CD8-positive, alpha-beta memory T cell (primary cell): ENCODE measurements at regions of chr11 and their contacts with region 1.

Region 1: DNA sequence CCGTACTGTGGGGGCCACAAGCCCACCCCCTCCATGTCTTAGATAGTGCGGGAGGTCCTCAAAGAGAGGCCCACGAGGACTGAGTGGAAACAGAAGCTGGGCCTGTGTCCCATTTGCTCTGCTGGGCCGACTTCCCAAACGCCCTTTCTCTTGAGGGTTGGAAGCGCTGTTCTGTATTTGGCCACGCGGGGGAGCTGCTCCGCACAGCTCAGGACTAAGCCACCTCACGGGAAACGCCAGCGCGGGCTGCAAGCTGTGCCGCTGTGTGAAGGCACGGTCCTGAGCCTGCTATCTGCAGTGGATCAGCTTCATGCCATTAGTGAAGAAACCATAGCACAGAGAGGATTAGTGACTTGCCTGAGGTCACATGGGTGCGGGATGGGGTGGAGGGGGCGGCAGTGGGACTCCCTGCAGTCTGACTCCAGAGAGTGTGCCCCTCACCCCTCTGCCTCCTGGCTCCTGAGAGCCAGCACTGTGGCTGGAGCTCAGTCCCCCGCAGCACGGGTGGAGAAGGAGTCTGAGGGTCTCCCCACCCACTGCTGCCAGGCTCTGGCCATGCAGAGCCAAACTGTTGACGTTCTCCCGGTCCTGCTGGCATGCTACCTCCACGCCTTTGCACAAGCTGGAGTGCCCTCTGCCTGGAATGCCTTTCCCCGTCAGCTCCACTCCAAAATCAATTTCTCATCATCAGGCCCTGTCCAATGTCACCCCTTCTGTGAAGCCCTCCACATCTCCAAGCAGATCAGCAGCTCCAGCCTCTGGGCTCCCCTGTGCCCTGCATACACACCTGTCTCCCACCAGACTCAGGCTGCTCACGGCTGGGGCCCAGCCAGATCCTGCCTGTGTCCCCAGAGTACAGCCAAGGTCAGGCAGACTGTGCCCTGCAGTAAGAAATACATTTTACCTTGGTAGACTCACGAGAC is 51.5 kb upstream of the LRRC32 start:
- DNase-seq: peak; percentile 41 to 77 (median 57)
- H3K4me3 ChIP-seq: no peak overlapping the region
- H3K4me3 Mint-ChIP-seq: peak overlapping the region in 2 of 7 donors; percentile 2 to 64
- H3K27ac ChIP-seq: no peak overlapping the region
- H3K27ac Mint-ChIP-seq: no peak overlapping the region
- H3K4me1 ChIP-seq: peaks cover 7% of the 10 kb centered on the region
- H3K4me1 Mint-ChIP-seq: peaks cover 6 to 8% (median 6%) of the 10 kb centered on the region in 3 donors
- H3K27me3 ChIP-seq: no peaks in the 10 kb centered on the region
- H3K27me3 Mint-ChIP-seq: peaks cover 14 to 36% of the 10 kb centered on the region in 2 donors

Region 2: DNA sequence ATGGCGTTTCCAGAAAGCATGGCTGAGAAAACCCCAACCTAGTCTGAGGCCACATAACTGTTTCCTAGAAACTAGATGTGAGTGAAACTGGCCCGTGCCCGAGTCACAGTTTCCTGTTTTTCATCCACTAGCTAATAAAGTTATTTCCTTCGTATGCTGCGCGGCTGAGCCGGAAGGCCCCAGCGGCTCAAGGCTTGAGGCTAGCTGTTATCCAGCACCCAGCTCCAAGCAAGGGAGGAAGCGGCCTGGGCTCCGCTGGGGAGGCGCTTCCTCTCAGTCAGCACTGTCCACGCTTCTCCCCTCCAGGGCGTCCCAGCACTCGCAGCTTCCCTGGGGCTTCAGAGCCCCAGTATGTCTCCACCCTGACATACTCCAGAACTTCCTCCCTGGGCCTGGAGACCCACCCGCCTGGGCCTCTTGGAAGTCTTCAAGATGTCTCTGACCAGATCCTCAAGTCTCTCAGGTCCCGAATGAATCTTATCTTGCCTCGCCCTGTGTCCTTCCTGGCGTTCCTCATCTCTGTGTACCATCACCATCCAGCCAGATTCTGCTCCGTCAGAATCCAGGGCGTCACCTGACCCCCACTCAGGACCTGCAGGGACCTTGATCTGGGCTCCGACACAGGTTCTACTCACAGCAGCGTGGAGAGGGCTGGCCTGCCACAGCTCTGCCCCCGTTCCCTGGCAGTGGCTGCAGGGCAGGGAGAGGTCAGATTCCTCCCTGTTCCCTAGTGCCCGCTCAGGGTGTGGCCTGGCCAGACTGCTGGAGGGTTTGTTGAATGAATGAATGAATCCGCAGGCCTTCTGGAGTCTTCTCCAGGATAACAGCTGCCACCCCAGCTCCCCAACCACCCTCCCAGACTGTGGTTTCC is 133.3 kb before region 1 on chr11:
- CTCF ChIA-PET with region 1: no interaction called
- POLR2A ChIA-PET with region 1: no interaction called
- DNase-seq: no peak
- H3K4me3 ChIP-seq: no peak overlapping the region
- H3K4me3 Mint-ChIP-seq: peak overlapping the region in 1 of 7 donors; percentile 27
- H3K27ac ChIP-seq: no peak overlapping the region
- H3K27ac Mint-ChIP-seq: peak overlapping the region in 5 of 8 donors; percentile 43 to 89 (median 73)
- H3K4me1 ChIP-seq: no peaks in the 10 kb centered on the region
- H3K4me1 Mint-ChIP-seq: peaks cover 0 to 18% (median 11%) of the 10 kb centered on the region in 3 donors
- H3K27me3 ChIP-seq: no peaks in the 10 kb centered on the region
- H3K27me3 Mint-ChIP-seq: peaks cover 0 to 6% of the 10 kb centered on the region in 2 donors

Region 3: GRCh38 chr11:76677458-76677765 is 44.6 kb before region 1 on chr11:
- CTCF ChIA-PET with region 1: no interaction called
- POLR2A ChIA-PET with region 1: no interaction called
- DNase-seq: no peak
- H3K4me3 ChIP-seq: no peak overlapping the region
- H3K4me3 Mint-ChIP-seq: no peak overlapping the region
- H3K27ac ChIP-seq: no peak overlapping the region
- H3K27ac Mint-ChIP-seq: no peak overlapping the region
- H3K4me1 ChIP-seq: peaks cover 13% of the 10 kb centered on the region
- H3K4me1 Mint-ChIP-seq: peaks cover 8 to 14% (median 12%) of the 10 kb centered on the region in 3 donors
- H3K27me3 ChIP-seq: no peaks in the 10 kb centered on the region
- H3K27me3 Mint-ChIP-seq: peaks cover 6 to 9% of the 10 kb centered on the region in 2 donors

Region 4: DNA sequence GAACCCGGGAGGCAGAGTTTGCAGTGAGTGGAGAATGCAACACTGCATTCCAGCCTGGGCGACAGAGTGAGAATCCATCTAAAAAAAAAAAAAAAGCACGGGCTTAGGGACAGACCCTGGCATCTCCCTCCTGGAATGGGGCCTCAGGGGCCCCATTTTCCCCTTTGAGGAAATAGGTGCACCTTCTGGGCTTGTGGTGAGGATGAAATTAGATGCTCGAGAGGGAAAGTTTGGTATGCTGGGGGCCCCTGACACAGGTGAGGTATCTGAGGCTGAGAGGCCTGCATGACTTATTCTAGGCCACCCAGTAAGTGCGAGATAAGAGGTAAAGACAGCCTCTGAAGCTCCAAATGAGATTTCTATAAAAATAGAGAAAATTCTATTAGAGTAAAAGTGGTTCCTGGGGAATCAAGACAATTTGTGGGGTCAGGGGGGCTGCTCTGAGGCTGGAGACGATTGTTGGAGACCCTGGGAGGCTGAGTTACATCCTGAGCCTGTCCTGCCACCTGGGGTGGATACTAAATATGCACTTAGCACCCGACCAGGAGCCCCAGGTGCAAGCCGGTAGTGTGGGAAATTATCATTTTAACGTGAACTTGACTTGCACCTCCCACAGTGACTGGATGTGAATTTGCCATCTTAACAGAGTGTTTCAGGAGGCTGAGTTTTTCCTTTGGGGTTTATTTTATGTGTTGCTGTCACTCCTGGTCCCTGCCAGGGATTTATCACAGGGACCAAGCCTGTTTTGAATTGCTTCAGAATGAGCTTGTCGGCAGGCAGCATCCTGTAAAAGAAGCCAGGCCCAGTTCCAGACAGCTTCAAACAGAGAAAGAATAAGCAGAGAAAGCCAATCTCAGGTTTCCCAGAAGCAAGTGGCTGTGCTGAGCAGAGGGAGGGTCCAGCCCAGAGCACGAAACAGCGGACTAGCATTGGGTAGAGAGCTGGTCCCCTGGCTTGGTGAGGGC is 12.7 kb after region 1 on chr11:
- CTCF ChIA-PET with region 1: interaction called, 15 read pairs
- POLR2A ChIA-PET with region 1: no interaction called
- DNase-seq: no peak
- H3K4me3 ChIP-seq: no peak overlapping the region
- H3K4me3 Mint-ChIP-seq: no peak overlapping the region
- H3K27ac ChIP-seq: no peak overlapping the region
- H3K27ac Mint-ChIP-seq: peak overlapping the region in 1 of 8 donors; percentile 29
- H3K4me1 ChIP-seq: no peaks in the 10 kb centered on the region
- H3K4me1 Mint-ChIP-seq: no peaks in the 10 kb centered on the region
- H3K27me3 ChIP-seq: no peaks in the 10 kb centered on the region
- H3K27me3 Mint-ChIP-seq: peaks cover 5 to 17% of the 10 kb centered on the region in 2 donors

Region 5: GRCh38 chr11:76799066-76799804 is 77.2 kb after region 1 on chr11:
- CTCF ChIA-PET with region 1: interaction called, 11 read pairs
- POLR2A ChIA-PET with region 1: no interaction called
- DNase-seq: peak; percentile 59 to 83 (median 73)
- H3K4me3 ChIP-seq: peak overlapping the region; percentile 51
- H3K4me3 Mint-ChIP-seq: peak overlapping the region in 6 of 7 donors; percentile 38 to 84 (median 52)
- H3K27ac ChIP-seq: no peak overlapping the region
- H3K27ac Mint-ChIP-seq: peak overlapping the region in 2 of 8 donors; percentile 46 to 58
- H3K4me1 ChIP-seq: peaks cover 11% of the 10 kb centered on the region
- H3K4me1 Mint-ChIP-seq: peaks cover 6 to 22% (median 7%) of the 10 kb centered on the region in 3 donors
- H3K27me3 ChIP-seq: no peaks in the 10 kb centered on the region
- H3K27me3 Mint-ChIP-seq: peaks cover 8 to 13% of the 10 kb centered on the region in 2 donors

Region 6: DNA sequence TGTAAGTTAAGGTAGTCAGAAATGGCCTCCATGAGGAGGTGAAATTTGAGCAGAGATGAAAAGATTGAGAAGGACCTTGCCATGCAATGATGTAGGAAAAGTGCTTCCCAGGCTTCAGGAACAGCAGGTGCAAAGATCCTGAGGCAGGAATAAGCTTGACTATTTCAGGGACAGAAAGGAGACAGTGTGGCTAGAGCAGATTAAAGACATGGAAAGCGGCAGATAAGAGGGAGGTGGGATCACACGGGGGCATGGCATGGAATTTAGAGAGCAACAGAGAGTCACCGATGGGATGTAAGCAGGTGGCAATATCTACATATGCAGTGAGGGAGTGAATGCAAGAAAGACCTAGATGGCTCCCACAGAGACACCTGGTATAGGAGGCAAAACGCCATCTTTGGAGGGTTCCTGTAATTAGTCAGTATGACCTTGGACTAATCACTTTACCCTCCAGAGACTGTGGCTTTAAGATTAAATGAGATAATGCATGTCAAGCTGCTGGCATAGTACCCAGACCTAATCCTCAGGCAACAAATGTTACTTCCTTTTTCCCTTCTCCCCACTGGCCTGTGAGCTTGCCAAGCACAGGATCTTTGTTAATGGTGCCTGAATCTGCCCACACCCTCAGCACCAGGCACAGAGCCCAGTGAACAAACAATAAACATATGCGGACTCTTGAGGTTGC is 114.1 kb after region 1 on chr11:
- CTCF ChIA-PET with region 1: no interaction called
- POLR2A ChIA-PET with region 1: no interaction called
- DNase-seq: no peak
- H3K4me3 ChIP-seq: no peak overlapping the region
- H3K4me3 Mint-ChIP-seq: no peak overlapping the region
- H3K27ac ChIP-seq: no peak overlapping the region
- H3K27ac Mint-ChIP-seq: no peak overlapping the region
- H3K4me1 ChIP-seq: no peaks in the 10 kb centered on the region
- H3K4me1 Mint-ChIP-seq: no peaks in the 10 kb centered on the region
- H3K27me3 ChIP-seq: no peaks in the 10 kb centered on the region
- H3K27me3 Mint-ChIP-seq: peaks cover 10 to 21% of the 10 kb centered on the region in 2 donors

Region 7: DNA sequence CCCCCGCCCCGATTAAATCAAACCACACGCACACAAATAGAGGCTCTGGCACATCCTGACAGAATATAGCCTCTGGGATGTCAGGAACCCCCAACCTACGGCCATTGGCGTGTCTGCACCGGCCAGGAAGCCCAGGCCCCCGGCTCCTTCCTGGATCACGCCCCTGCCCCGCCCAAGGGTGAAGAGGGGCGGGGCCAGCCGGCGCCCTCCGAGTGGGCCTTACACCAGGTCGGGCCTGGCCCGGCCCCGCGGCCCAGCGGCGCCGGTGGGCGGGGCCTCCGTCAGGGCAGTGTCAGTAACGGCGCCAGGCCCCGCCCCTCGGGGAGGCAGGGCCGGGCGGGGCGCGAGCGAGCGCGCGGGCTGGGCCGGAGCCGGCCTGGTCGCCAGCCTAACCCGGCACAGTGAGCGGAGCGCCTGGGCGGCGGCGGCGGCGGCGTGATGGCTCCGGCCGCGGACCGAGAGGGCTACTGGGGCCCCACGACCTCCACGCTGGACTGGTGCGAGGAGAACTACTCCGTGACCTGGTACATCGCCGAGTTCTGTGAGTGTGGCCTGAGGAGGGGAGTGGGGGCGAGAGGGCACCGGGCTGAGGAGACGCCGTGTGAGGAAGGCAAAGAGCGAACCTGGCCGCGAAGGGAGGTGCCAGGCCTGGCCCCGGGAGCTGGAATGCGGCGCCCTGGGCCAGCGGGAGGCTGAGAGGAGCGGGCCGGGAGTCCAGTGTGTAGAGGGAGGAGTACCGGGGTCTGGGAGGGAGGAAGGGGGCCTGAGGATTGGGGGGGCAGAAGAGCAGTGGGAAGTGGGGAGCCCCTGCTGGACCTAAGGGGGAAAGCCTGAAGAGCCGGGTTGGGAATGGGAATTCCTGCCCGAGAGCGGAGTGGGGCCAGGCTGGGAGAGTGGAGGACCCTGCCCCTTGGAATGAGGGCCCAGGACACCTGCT is 138.8 kb after region 1 on chr11 and contains the start of gene ACER3:
- CTCF ChIA-PET with region 1: no interaction called
- POLR2A ChIA-PET with region 1: no interaction called
- DNase-seq: peak; percentile 57 to 86 (median 79)
- H3K4me3 ChIP-seq: peak within 1 kb of the TSS; percentile 60
- H3K4me3 Mint-ChIP-seq: peak within 1 kb of the TSS; percentile 84 to 94 (median 87)
- H3K27ac ChIP-seq: peak within 1 kb of the TSS; percentile 70
- H3K27ac Mint-ChIP-seq: peak within 1 kb of the TSS; percentile 12 to 94 (median 85)
- H3K4me1 ChIP-seq: peaks cover 12% of the 10 kb centered on the region
- H3K4me1 Mint-ChIP-seq: peaks cover 13 to 29% (median 28%) of the 10 kb centered on the region in 3 donors
- H3K27me3 ChIP-seq: no peaks in the 10 kb centered on the region
- H3K27me3 Mint-ChIP-seq: no peaks in the 10 kb centered on the region
- total RNA-seq, gene ACER3: 16.1 to 19.1 TPM

Region 8: GRCh38 chr11:76919887-76920746 is 198.1 kb after region 1 on chr11:
- CTCF ChIA-PET with region 1: interaction called, 10 read pairs
- POLR2A ChIA-PET with region 1: no interaction called
- DNase-seq: peak; percentile 29 to 65 (median 62)
- H3K4me3 ChIP-seq: peak overlapping the region; percentile 15
- H3K4me3 Mint-ChIP-seq: peak overlapping the region in 6 of 7 donors; percentile 67 to 79 (median 72)
- H3K27ac ChIP-seq: no peak overlapping the region
- H3K27ac Mint-ChIP-seq: peak overlapping the region in 2 of 8 donors; percentile 35 to 75
- H3K4me1 ChIP-seq: peaks cover 5% of the 10 kb centered on the region
- H3K4me1 Mint-ChIP-seq: peaks cover 6 to 15% (median 13%) of the 10 kb centered on the region in 3 donors
- H3K27me3 ChIP-seq: no peaks in the 10 kb centered on the region
- H3K27me3 Mint-ChIP-seq: no peaks in the 10 kb centered on the region